Heart right ventricle (tissue), 16 donors: ENCODE measurements at regions of chr1 and their contacts with region 1.

Region 1: GRCh38 chr1:150561974-150562445 is 12.8 kb downstream of the ADAMTSL4 start:
- DNase-seq: peak; percentile 94 to 95
- ATAC-seq: peak; percentile 80 to 91 (median 88)
- H3K4me3 ChIP-seq: peak overlapping the region; percentile 43 to 64 (median 58)
- H3K27ac ChIP-seq: peak overlapping the region; percentile 91 to 100 (median 100)
- H3K4me1 ChIP-seq: peaks cover 50 to 88% (median 78%) of the 10 kb centered on the region in 9 donors
- H3K27me3 ChIP-seq: no peaks in the 10 kb centered on the region
- CTCF ChIP-seq: no peak

Region 2: GRCh38 chr1:150532868-150533302 is 29.1 kb before region 1 on chr1:
- intact Hi-C with region 1: loop called in 1 of 10 experiments (anchors 2 kb)
- DNase-seq: no peak
- ATAC-seq: peak in 2 of 8 donors; percentile 3 to 9
- H3K4me3 ChIP-seq: no peak overlapping the region
- H3K27ac ChIP-seq: peak overlapping the region in 9 of 10 donors; percentile 17 to 89 (median 72)
- H3K4me1 ChIP-seq: peaks cover 2 to 62% (median 27%) of the 10 kb centered on the region in 9 donors
- H3K27me3 ChIP-seq: no peaks in the 10 kb centered on the region
- CTCF ChIP-seq: peak in 4 of 9 donors; percentile 4 to 38 (median 24)

Region 3: DNA sequence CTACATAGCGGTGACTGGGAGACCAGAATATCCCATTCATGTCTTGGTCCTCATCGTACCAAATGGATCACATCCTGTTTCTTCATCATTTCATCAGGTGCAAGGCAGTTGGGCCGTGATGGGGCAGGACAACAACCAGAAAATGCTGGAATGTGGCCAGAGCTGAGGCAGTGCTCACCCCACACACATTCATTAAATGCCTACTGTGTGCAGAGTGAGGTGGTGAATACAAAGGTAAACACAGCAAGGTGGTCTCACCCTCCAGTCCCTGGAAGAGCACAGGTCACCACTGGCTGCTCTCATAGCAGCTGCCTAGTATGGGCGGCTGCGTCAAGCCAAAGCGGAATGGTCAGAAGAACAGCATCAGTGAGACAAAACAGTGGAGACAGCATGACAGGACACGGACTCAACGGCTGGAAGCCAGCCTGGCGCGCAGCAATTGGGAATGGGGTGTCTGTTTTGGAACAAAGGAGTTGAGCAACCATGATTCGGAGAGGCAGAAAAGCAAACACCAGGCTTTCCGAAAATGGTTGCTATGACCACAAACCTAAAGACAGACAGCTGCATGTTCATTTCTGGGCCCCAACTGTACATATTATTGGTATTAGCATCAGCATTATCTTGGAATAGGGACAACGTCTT is 18.4 kb before region 1 on chr1:
- intact Hi-C with region 1: no loop called
- DNase-seq: peak in 1 of 2 donors; percentile 52
- ATAC-seq: peak in 5 of 8 donors; percentile 23 to 71 (median 62)
- H3K4me3 ChIP-seq: no peak overlapping the region
- H3K27ac ChIP-seq: peak overlapping the region in 2 of 10 donors; percentile 9 to 26
- H3K4me1 ChIP-seq: peaks cover 0 to 13% (median 6%) of the 10 kb centered on the region in 9 donors
- H3K27me3 ChIP-seq: no peaks in the 10 kb centered on the region
- CTCF ChIP-seq: no peak

Region 4: DNA sequence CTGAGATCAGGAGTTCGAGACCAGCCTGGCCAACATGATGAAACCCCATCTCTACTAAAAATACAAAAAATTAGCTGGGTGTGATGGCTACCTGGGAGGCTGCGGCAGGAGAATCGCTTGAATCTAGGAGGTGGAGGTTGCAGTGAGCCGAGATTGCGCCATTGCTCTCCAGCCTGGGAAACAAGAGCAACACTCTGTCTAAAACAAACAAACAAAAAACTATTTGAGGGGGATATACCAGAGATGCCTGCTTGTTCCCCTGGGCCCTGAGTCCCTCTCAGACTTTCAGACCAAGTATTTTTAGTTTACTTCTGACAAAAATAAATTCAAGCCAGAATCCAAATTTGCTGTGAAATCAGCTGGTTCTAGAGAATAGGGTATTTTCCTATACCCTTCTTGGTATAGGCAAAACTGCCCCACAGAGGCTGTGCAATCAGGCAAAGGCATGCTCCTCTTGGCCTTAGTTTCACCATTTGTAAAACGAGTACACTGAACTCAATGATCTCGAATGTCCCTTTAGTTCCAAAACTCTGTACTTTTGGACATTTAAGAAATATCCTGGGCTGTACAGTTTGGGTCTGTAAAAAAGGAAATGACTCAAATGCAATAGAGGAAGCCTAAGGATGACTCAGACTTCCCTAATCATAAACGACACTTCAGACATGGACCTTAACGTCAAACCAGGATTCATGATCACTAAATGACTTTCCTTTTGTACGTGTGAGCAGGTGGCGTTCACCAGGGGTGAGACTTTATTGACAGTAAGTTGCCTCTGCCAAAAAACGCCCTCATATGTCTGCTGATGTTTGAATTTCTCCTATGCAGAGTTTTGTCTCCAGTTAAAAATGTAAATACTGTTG is 51.3 kb after region 1 on chr1:
- intact Hi-C with region 1: loop called in 2 of 10 experiments (anchors 2 to 5 kb)
- DNase-seq: peak in 1 of 2 donors; percentile 71
- ATAC-seq: peak; percentile 59 to 85 (median 75)
- H3K4me3 ChIP-seq: peak overlapping the region in 4 of 10 donors; percentile 3 to 34 (median 18)
- H3K27ac ChIP-seq: peak overlapping the region; percentile 68 to 96 (median 84)
- H3K4me1 ChIP-seq: peaks cover 9 to 80% (median 53%) of the 10 kb centered on the region in 9 donors
- H3K27me3 ChIP-seq: no peaks in the 10 kb centered on the region
- CTCF ChIP-seq: no peak

Region 5: GRCh38 chr1:150629115-150629928 is 67.3 kb after region 1 on chr1 and contains the start of gene ENSA:
- intact Hi-C with region 1: loop called in 4 of 10 experiments (anchors 2 to 5 kb)
- DNase-seq: peak; percentile 95 to 99
- ATAC-seq: peak; percentile 96 to 98 (median 97)
- H3K4me3 ChIP-seq: peak within 1 kb of the TSS; percentile 48 to 81 (median 66)
- H3K27ac ChIP-seq: peak within 1 kb of the TSS; percentile 83 to 100 (median 96)
- H3K4me1 ChIP-seq: peaks cover 3 to 54% (median 24%) of the 10 kb centered on the region in 9 donors
- H3K27me3 ChIP-seq: no peaks in the 10 kb centered on the region
- CTCF ChIP-seq: no peak
- total RNA-seq, gene ENSA: 115 to 148 (median 132) TPM

Region 6: DNA sequence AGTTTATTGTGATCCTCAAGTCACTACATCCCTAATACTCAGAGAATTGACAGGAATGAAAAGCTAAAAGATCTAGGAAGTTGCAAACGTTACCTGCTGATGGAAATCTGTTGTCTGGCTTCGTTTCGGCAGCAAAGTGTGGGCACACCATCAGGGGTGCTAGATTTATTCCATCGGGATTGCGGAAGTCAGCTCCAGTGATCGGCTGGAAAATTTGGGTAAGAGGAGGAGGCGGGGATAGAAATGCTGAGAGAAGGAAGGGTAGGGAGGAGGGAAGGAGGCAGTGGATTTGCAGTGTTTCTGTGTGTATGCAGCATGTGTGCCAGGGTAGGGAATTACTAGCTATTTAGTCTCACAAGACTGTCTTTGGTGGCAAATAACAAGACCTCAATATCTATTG is 246.1 kb after region 1 on chr1 and contains the start of gene CTSK:
- intact Hi-C with region 1: loop called in 5 of 10 experiments (anchors 10 kb)
- DNase-seq: peak in 1 of 2 donors; percentile 20
- ATAC-seq: peak in 6 of 8 donors; percentile 44 to 71 (median 54)
- H3K4me3 ChIP-seq: peak within 1 kb of the TSS in 9 of 10 donors; percentile 2 to 48 (median 31)
- H3K27ac ChIP-seq: peak within 1 kb of the TSS in 4 of 10 donors; percentile 9 to 43 (median 32)
- H3K4me1 ChIP-seq: peaks cover 0 to 22% (median 0%) of the 10 kb centered on the region in 9 donors
- H3K27me3 ChIP-seq: no peaks in the 10 kb centered on the region
- CTCF ChIP-seq: no peak
- total RNA-seq, gene CTSK: 2.1 to 10.1 (median 6.6) TPM

Region 7: DNA sequence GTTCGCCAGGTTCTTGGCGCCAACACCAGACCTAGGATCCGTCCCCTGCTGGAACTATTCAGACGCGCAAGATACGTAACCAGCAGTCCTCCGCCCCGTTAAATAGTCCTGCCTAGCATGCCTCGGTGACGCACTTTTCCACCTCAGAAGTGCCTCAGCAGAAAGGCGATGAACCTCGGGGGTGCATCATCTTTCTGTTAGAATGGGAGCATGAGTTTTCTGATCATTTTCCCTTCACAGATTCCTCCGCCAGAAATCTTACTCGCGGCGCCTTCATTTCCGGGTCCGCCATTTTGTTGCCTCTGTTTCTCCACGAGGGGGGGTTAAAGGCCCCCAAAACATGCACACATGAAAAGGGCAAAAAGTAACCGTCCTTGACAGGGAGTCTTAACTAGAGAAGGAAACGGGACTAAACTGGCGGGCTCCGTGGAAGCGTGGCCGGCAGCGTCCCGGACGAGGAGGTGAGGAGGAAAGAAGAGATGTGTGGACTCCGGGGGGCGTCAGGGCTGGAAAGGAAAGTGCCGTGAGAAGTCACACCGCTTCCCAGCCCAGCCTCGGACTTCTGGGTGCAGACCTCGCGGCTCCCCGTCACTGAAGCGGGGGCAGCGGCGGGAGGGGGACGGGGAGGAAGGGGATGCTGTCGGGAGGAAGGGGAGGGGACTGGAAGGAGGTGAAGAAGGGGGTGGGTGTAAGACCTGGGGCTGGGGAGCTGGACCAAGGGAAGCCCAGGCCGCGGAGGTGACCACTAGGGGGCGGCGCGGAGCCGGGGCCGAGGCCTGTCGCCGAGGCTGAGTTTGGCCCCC is 508.7 kb after region 1 on chr1 and contains the start of gene GABPB2:
- intact Hi-C with region 1: no loop called
- DNase-seq: peak; percentile 93 to 96
- ATAC-seq: peak; percentile 92 to 97 (median 96)
- H3K4me3 ChIP-seq: peak within 1 kb of the TSS; percentile 51 to 95 (median 78)
- H3K27ac ChIP-seq: peak within 1 kb of the TSS; percentile 96 to 100 (median 99)
- H3K4me1 ChIP-seq: peaks cover 4 to 29% (median 20%) of the 10 kb centered on the region in 9 donors
- H3K27me3 ChIP-seq: no peaks in the 10 kb centered on the region
- CTCF ChIP-seq: peak in 8 of 9 donors; percentile 91 to 98 (median 94)
- total RNA-seq, gene GABPB2: 9.1 to 14.4 (median 10.6) TPM